Mammary epithelial cell (primary cell): ENCODE measurements at regions of chr9 and their contacts with region 1.

Region 1: DNA sequence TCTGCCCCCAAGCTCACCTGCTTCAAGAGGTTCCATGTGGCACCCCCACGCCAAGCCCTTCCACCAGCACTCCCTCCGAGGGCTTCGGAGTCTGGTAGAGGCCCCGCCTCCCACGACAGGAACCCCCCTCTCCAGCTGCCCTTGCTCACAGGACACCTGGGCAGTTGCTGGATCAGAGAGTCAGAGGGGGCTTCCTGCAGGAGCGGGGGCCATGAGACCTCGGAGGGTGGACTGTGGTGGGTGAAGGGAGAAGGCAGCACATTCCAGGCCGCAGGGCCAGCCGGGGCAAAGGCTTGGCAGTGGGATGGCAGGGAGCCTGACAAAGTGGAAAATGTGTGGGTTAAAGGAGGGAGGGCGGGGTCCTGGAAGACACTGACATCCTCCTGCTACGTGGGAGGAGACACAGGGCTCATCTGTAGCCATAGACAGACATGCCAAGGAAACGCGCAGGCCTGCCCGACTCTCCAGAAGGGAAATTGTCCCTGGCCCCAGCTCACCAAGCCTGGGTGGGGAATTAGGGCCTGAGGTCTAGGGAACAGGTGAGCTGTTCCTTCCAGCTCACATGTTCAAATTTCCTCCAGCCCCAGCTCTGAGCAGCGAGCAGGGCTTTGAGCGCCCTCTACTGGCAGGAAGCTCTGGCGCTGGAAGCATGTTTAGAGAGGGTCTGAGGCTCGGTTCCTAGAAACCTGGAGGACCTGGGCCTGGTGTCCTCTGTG is 74.2 kb downstream of the NTNG2 start:
- DNase-seq: peak; percentile 58
- H3K4me3 ChIP-seq: no peak overlapping the region
- H3K27ac ChIP-seq: no peak overlapping the region
- H3K4me1 ChIP-seq: peaks cover 4% of the 10 kb centered on the region
- H3K27me3 ChIP-seq: no peaks in the 10 kb centered on the region
- CTCF ChIP-seq: peak; percentile 98

Region 2: GRCh38 chr9:131762356-131762932 is 473.7 kb before region 1 on chr9:
- CTCF ChIA-PET with region 1: interaction called, 6 read pairs
- dilution Hi-C with region 1: no loop called
- in situ Hi-C with region 1: no loop called
- intact Hi-C with region 1: loop called (anchors 1 kb)
- DNase-seq: no peak
- H3K4me3 ChIP-seq: no peak overlapping the region
- H3K27ac ChIP-seq: no peak overlapping the region
- H3K4me1 ChIP-seq: peaks cover 2% of the 10 kb centered on the region
- H3K27me3 ChIP-seq: no peaks in the 10 kb centered on the region
- CTCF ChIP-seq: peak; percentile 46 to 80

Region 3: DNA sequence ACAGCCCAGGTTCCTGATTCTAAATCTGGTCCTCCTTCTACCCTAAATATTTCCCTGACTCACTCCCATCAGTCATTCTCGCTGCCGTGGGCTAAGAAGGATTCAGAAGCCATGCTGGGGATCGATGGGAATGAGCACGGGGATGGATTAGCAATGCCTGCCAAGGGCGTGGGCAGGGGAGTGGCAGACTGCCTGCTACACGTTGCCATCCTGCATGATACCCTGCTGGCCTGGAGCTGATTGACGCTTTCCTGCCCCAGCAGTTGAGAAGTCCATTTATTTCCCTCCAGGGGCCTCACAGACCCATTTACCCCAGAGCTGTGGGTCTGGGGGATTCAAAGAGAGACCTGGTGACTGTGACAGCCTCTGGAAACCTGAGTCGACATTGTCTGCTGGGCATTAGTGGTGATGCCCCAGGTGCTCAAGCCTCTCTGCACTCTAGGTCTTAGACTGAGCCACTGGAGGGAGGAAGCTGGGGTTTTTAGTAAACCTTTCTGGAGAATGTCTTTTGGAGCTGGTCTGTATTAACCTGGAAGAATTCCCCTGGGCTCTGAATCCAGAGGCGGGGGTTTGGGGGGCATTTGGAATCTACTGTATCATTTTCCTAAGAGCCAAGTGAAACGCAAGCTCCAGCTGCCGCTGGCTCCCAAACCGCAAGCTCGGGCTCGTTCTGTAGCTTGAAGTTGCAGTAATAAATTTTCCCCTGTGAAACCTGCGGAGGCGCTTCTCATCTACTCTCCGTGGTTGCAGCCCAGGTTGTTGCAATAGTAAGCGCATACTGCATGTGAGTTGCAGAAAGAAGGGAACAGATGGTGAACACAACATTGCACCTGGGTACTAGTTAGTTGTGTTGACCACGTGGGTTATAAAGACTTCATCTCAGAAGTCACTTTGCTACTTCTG is 419.9 kb before region 1 on chr9:
- CTCF ChIA-PET with region 1: interaction called, 6 read pairs
- dilution Hi-C with region 1: no loop called
- in situ Hi-C with region 1: no loop called
- intact Hi-C with region 1: loop called (anchors 5 kb)
- DNase-seq: peak; percentile 47
- H3K4me3 ChIP-seq: no peak overlapping the region
- H3K27ac ChIP-seq: no peak overlapping the region
- H3K4me1 ChIP-seq: no peaks in the 10 kb centered on the region
- H3K27me3 ChIP-seq: no peaks in the 10 kb centered on the region
- CTCF ChIP-seq: peak in 1 of 2 donors; percentile 32

Region 4: GRCh38 chr9:131954299-131954698 is 281.8 kb before region 1 on chr9:
- CTCF ChIA-PET with region 1: no interaction called
- dilution Hi-C with region 1: no loop called
- in situ Hi-C with region 1: no loop called
- intact Hi-C with region 1: loop called (anchors 5 kb)
- DNase-seq: peak; percentile 20
- H3K4me3 ChIP-seq: no peak overlapping the region
- H3K27ac ChIP-seq: no peak overlapping the region
- H3K4me1 ChIP-seq: no peaks in the 10 kb centered on the region
- H3K27me3 ChIP-seq: no peaks in the 10 kb centered on the region
- CTCF ChIP-seq: peak; percentile 35 to 58

Region 5: GRCh38 chr9:132018957-132019405 is 217.1 kb before region 1 on chr9:
- CTCF ChIA-PET with region 1: no interaction called
- dilution Hi-C with region 1: no loop called
- in situ Hi-C with region 1: no loop called
- intact Hi-C with region 1: loop called (anchors 2 kb)
- DNase-seq: no peak
- H3K4me3 ChIP-seq: no peak overlapping the region
- H3K27ac ChIP-seq: no peak overlapping the region
- H3K4me1 ChIP-seq: peaks cover 14% of the 10 kb centered on the region
- H3K27me3 ChIP-seq: no peaks in the 10 kb centered on the region
- CTCF ChIP-seq: peak in 1 of 2 donors; percentile 17

Region 6: GRCh38 chr9:132169672-132170392 is 66.3 kb before region 1 on chr9:
- CTCF ChIA-PET with region 1: interaction called, 14 read pairs
- dilution Hi-C with region 1: no loop called
- in situ Hi-C with region 1: no loop called
- intact Hi-C with region 1: loop called (anchors 1 kb)
- DNase-seq: peak; percentile 31
- H3K4me3 ChIP-seq: no peak overlapping the region
- H3K27ac ChIP-seq: no peak overlapping the region
- H3K4me1 ChIP-seq: no peaks in the 10 kb centered on the region
- H3K27me3 ChIP-seq: peaks cover 4% of the 10 kb centered on the region
- CTCF ChIP-seq: peak; percentile 74 to 90

Region 7: GRCh38 chr9:132199056-132199455 is 37.0 kb before region 1 on chr9:
- CTCF ChIA-PET with region 1: no interaction called
- dilution Hi-C with region 1: loop called (anchors 5 kb)
- in situ Hi-C with region 1: no loop called
- intact Hi-C with region 1: no loop called
- DNase-seq: peak; percentile 36
- H3K4me3 ChIP-seq: no peak overlapping the region
- H3K27ac ChIP-seq: no peak overlapping the region
- H3K4me1 ChIP-seq: no peaks in the 10 kb centered on the region
- H3K27me3 ChIP-seq: no peaks in the 10 kb centered on the region
- CTCF ChIP-seq: no peak

Region 8: GRCh38 chr9:132406554-132407122 is 170.5 kb after region 1 on chr9 and contains the start of gene TTF1:
- CTCF ChIA-PET with region 1: no interaction called
- dilution Hi-C with region 1: no loop called
- in situ Hi-C with region 1: no loop called
- intact Hi-C with region 1: no loop called
- DNase-seq: peak; percentile 79
- H3K4me3 ChIP-seq: peak within 1 kb of the TSS; percentile 46 to 77 (median 71)
- H3K27ac ChIP-seq: peak within 1 kb of the TSS; percentile 64
- H3K4me1 ChIP-seq: peaks cover 25% of the 10 kb centered on the region
- H3K27me3 ChIP-seq: no peaks in the 10 kb centered on the region
- CTCF ChIP-seq: no peak
- total RNA-seq, gene TTF1: 7.5 to 11.4 TPM

Region 9: GRCh38 chr9:133030317-133031129 is 794.4 kb after region 1 on chr9 and contains the start of gene GTF3C5:
- CTCF ChIA-PET with region 1: no interaction called
- dilution Hi-C with region 1: no loop called
- in situ Hi-C with region 1: no loop called
- intact Hi-C with region 1: no loop called
- DNase-seq: peak; percentile 99
- H3K4me3 ChIP-seq: peak within 1 kb of the TSS; percentile 93 to 96 (median 94)
- H3K27ac ChIP-seq: peak within 1 kb of the TSS; percentile 87
- H3K4me1 ChIP-seq: peaks cover 15% of the 10 kb centered on the region
- H3K27me3 ChIP-seq: no peaks in the 10 kb centered on the region
- CTCF ChIP-seq: no peak
- total RNA-seq, gene GTF3C5: 28.5 to 54.2 TPM